T-cell (primary cell): ENCODE measurements at regions of chr15 and their contacts with region 1.

Region 1: GRCh38 chr15:51192521-51193280 is 98.0 kb upstream of the TNFAIP8L3 start:
- DNase-seq: peak; percentile 8 to 63 (median 39)
- ATAC-seq: peak in 2 of 4 experiments; percentile 51 to 63
- H3K4me3 ChIP-seq: no peak overlapping the region
- H3K4me3 Mint-ChIP-seq: no peak overlapping the region
- H3K27ac ChIP-seq: no peak overlapping the region
- H3K27ac Mint-ChIP-seq: no peak overlapping the region
- H3K4me1 ChIP-seq: peaks cover 0 to 4% of the 10 kb centered on the region in 2 experiments
- H3K4me1 Mint-ChIP-seq: no peaks in the 10 kb centered on the region
- H3K27me3 ChIP-seq: peaks cover 0 to 29% of the 10 kb centered on the region in 2 experiments
- H3K27me3 Mint-ChIP-seq: peaks cover 32 to 40% of the 10 kb centered on the region in 2 donors

Region 2: DNA sequence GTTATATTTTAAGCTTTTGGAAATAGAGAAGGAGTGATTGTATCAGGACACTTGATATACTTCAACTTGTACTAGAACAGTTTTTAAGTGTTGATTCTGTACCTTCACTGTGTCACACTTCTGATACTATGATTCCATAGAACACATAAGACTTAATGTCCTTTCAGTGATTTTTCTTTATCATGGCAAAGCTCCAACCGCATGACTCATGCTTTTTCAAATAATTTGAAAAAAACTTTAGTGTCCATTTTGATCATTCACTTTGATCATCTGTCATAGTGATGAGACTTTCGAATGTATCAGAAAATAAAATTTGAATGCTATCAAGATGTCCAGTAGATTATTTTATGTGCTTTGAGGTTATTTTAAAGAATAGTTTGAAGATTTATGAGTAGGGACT is 252.2 kb before region 1 on chr15:
- CTCF ChIA-PET with region 1: interaction called in 1 of 2 experiments, 10 read pairs
- POLR2A ChIA-PET with region 1: no interaction called
- DNase-seq: no peak
- ATAC-seq: no peak
- H3K4me3 ChIP-seq: no peak overlapping the region
- H3K4me3 Mint-ChIP-seq: no peak overlapping the region
- H3K27ac ChIP-seq: no peak overlapping the region
- H3K27ac Mint-ChIP-seq: no peak overlapping the region
- H3K4me1 ChIP-seq: no peaks in the 10 kb centered on the region
- H3K4me1 Mint-ChIP-seq: no peaks in the 10 kb centered on the region
- H3K27me3 ChIP-seq: no peaks in the 10 kb centered on the region
- H3K27me3 Mint-ChIP-seq: no peaks in the 10 kb centered on the region

Region 3: GRCh38 chr15:51162865-51163762 is 29.6 kb before region 1 on chr15:
- CTCF ChIA-PET with region 1: interaction called, 3 to 10 read pairs
- POLR2A ChIA-PET with region 1: no interaction called
- DNase-seq: peak in 30 of 35 experiments; percentile 11 to 68 (median 25)
- ATAC-seq: peak; percentile 53 to 66 (median 59)
- H3K4me3 ChIP-seq: no peak overlapping the region
- H3K4me3 Mint-ChIP-seq: no peak overlapping the region
- H3K27ac ChIP-seq: no peak overlapping the region
- H3K27ac Mint-ChIP-seq: no peak overlapping the region
- H3K4me1 ChIP-seq: no peaks in the 10 kb centered on the region
- H3K4me1 Mint-ChIP-seq: peaks cover 0 to 3% (median 2%) of the 10 kb centered on the region in 3 donors
- H3K27me3 ChIP-seq: peaks cover 0 to 10% of the 10 kb centered on the region in 2 experiments
- H3K27me3 Mint-ChIP-seq: peaks cover 14 to 25% of the 10 kb centered on the region in 2 donors

Region 4: GRCh38 chr15:51460796-51461195 is 268.1 kb after region 1 on chr15:
- CTCF ChIA-PET with region 1: no interaction called
- POLR2A ChIA-PET with region 1: no interaction called
- DNase-seq: no peak
- ATAC-seq: no peak
- H3K4me3 ChIP-seq: no peak overlapping the region
- H3K4me3 Mint-ChIP-seq: no peak overlapping the region
- H3K27ac ChIP-seq: no peak overlapping the region
- H3K27ac Mint-ChIP-seq: no peak overlapping the region
- H3K4me1 ChIP-seq: no peaks in the 10 kb centered on the region
- H3K4me1 Mint-ChIP-seq: no peaks in the 10 kb centered on the region
- H3K27me3 ChIP-seq: no peaks in the 10 kb centered on the region
- H3K27me3 Mint-ChIP-seq: no peaks in the 10 kb centered on the region

Region 5: DNA sequence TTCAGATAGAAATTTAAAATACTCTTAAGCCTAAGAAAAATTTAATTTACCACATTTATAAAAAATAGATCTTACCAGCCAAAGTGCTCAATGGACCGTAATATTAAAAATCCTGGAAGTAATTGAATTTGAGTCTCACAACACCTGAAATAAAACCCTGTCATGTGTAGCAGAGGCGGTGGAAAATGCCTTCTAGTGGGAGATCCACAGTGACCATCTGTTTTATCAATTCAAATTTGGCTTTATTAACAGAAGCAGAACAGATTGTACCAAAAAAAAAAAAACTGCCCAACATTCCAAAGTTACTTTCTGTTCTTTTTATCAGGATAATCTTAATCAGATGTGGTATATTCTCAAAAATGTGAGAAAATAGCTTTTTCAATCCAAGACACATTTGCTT is 358.1 kb after region 1 on chr15:
- CTCF ChIA-PET with region 1: no interaction called
- POLR2A ChIA-PET with region 1: no interaction called
- DNase-seq: no peak
- ATAC-seq: no peak
- H3K4me3 ChIP-seq: no peak overlapping the region
- H3K4me3 Mint-ChIP-seq: no peak overlapping the region
- H3K27ac ChIP-seq: no peak overlapping the region
- H3K27ac Mint-ChIP-seq: no peak overlapping the region
- H3K4me1 ChIP-seq: no peaks in the 10 kb centered on the region
- H3K4me1 Mint-ChIP-seq: no peaks in the 10 kb centered on the region
- H3K27me3 ChIP-seq: no peaks in the 10 kb centered on the region
- H3K27me3 Mint-ChIP-seq: no peaks in the 10 kb centered on the region